HAP-1 (cell line): ENCODE measurements at regions of chr9 and their contacts with region 1.

Region 1: DNA sequence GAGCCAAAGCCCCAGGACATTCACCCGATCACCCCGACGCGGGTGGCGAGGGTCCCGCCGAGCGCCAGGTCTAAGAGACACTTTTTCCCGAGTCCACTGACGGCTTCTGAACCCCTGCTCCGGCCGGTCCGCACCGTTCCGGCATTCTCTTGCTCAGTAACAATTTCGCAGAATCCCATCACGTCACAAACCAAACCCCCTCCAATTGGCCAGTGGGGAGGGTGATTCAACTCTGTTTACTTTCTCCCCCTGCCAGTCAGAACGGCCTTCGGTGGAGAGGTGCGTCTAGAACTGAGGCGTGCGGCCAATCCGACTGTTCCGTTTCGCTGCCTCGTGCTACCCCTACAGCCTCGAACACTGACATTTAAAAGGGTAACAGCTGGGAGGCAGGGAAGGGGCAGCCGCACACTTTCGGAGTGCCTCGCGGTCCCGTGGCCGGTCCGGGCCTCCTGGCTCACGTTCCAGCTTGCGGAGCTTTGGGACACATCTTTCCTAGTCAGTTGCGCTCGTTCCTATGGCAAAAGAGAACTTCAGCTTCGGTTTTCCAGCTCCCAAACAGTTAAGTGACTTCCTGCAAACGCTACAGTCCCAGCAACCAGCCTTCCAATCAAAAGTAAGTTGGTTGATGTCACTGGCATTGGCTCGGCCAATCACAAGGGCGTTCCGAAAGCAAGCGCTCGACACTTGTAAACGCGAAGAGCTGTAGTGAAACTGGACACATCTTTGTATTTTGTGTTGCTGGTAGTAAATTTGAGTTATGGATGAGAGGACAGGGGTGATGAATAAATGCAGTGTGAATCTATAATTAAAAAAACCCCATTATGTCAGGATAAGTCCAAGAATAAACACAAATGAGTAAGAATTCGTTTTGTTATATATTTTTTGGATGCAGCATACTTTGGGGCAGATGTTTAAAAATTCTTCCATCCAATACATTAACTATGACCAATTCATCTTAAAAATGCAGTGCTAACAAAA is at the start of gene KLF9:
- DNase-seq: peak; percentile 90 to 93
- H3K4me3 ChIP-seq: peak within 1 kb of the TSS; percentile 77
- H3K4me1 ChIP-seq: peaks cover 39% of the 10 kb centered on the region
- H3K27me3 ChIP-seq: no peaks in the 10 kb centered on the region

Region 2: GRCh38 chr9:70609542-70610286 is 195.6 kb after region 1 on chr9:
- in situ Hi-C with region 1: loop called (anchors 10 kb)
- DNase-seq: no peak
- H3K4me3 ChIP-seq: no peak overlapping the region
- H3K4me1 ChIP-seq: peaks cover 26% of the 10 kb centered on the region
- H3K27me3 ChIP-seq: no peaks in the 10 kb centered on the region